Caco-2 (cell line): ENCODE measurements at regions of chr17 and their contacts with region 1.

Region 1: DNA sequence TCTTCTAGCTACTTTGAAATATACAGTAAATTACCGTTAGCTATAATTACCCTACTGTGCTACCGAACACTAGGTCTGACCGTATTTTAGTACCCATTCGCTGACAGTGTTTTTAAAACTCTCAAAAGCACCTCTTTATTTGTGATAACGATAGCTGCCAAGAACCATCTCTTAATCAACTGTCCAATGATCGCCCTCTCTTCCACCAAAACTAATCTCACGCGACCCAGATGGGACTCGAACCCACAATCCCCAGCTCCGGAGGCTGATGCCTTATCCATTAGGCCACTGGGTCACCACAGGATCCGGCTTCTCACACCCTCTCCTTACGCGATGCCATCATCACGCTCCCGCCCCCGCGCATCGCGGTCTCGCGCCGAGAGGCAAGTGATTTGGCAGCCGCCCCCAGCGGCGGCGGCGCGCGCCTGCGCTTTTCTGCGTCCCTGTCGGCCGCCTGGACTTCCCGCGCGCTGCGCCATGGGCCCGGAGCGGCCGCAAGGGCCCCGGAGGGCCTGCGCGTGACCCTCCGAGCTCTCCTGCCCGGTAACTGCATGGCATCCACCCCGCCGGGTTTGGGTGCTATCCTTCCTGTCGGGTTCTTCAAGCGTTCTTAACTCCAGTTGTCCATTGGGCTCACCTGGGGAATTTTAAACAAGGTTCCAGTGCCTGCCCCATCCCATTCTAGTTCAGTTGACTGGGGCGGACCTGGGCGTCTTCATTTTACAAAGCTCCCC is 15.7 kb upstream of the KPNA2 start:
- DNase-seq: peak; percentile 96 to 99
- H3K4me3 ChIP-seq: peak overlapping the region; percentile 63
- H3K4me3 Mint-ChIP-seq: peak overlapping the region; percentile 92
- H3K27ac Mint-ChIP-seq: peak overlapping the region; percentile 96
- H3K4me1 ChIP-seq: 0 out of 2 replicates have a peak, but pooled peaks cover 4% of the 10 kb centered on the region
- H3K4me1 Mint-ChIP-seq: peaks cover 9% of the 10 kb centered on the region
- H3K27me3 ChIP-seq: no peaks in the 10 kb centered on the region
- H3K27me3 Mint-ChIP-seq: peaks cover 3% of the 10 kb centered on the region
- CTCF ChIP-seq: peak; percentile 43 to 70

Region 2: GRCh38 chr17:67993596-67994361 is 26.1 kb before region 1 on chr17:
- CTCF ChIA-PET with region 1: interaction called, 7 read pairs
- POLR2A ChIA-PET with region 1: interaction called, 5 read pairs
- intact Hi-C with region 1: loop called (anchors 1 kb)
- DNase-seq: peak; percentile 84 to 93
- H3K4me3 ChIP-seq: peak overlapping the region; percentile 68
- H3K4me3 Mint-ChIP-seq: peak overlapping the region; percentile 96
- H3K27ac Mint-ChIP-seq: peak overlapping the region; percentile 76
- H3K4me1 ChIP-seq: peaks cover 6% of the 10 kb centered on the region; the same call in 1 of the 2 replicates
- H3K4me1 Mint-ChIP-seq: peaks cover 15% of the 10 kb centered on the region
- H3K27me3 ChIP-seq: no peaks in the 10 kb centered on the region
- H3K27me3 Mint-ChIP-seq: no peaks in the 10 kb centered on the region
- CTCF ChIP-seq: no peak

Region 3: DNA sequence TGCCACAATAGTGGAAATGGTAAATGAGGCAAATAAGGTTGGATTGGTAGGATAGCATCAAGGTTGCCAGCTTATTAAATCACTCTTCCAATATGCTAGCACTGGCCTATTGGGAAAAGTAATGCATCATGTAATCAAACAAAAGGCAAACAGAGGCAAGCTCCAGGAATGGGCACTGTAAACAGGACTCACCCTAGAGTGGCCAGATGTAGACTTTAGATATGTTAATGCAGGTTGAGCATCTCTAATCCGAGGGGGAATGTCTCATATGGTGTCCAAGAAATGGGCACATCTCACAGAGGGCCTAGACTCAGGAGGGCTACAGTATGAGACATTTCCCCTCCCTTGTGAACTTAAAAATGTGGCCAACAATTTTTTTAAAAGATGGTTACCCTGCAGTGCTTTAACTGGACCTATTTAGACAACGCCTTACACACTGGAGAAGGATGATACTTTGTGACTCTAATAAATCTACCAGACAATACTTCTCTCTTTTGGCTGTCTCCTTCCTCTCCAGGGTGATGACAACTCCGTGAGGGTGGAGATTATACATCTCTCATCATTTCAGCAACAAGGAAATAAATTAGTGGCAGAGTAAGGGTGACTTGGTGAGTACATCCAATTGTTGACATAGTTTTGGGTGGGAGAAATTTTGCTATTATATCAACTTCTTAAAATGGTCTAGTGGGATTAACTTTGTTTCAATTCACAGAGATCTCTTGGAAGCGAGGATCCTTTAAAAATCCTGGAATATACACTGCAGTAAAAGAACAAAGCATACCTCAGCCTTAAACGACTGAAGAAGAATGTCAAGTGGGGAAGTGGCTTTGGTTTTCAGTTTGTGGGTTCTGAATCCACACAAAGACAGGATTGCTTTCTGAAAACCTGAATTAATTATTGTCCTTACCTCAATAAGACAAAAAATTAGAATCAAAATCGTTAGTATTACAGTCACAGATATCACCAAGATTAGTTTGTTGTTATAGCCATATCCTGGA is 105.3 kb after region 1 on chr17:
- CTCF ChIA-PET with region 1: no interaction called
- POLR2A ChIA-PET with region 1: no interaction called
- intact Hi-C with region 1: no loop called
- DNase-seq: no peak
- H3K4me3 ChIP-seq: no peak overlapping the region
- H3K4me3 Mint-ChIP-seq: no peak overlapping the region
- H3K27ac Mint-ChIP-seq: no peak overlapping the region
- H3K4me1 ChIP-seq: no peaks in the 10 kb centered on the region
- H3K4me1 Mint-ChIP-seq: no peaks in the 10 kb centered on the region
- H3K27me3 ChIP-seq: no peaks in the 10 kb centered on the region
- H3K27me3 Mint-ChIP-seq: no peaks in the 10 kb centered on the region
- CTCF ChIP-seq: no peak

Region 4: DNA sequence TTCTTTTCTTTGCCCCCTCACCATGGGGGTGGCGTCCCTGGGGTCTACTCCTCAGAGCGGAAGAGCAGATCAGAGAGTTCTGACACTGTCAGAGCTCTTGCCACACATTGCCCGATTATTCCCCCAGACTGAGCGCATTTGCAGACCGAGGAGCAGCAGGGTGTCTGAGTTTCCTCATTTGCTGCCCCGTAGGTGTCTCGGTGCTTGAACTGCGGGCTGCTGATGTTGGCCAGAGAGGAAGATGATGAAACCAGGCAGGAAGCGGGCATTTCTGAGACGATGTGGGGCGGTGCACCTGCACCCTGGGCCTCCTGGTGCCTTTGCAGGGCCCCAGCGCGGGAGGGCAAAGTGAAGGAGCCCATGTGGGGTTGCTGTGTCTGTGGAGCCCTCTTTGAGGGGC is 326.6 kb after region 1 on chr17:
- CTCF ChIA-PET with region 1: no interaction called
- POLR2A ChIA-PET with region 1: no interaction called
- intact Hi-C with region 1: no loop called
- DNase-seq: no peak
- H3K4me3 ChIP-seq: no peak overlapping the region
- H3K4me3 Mint-ChIP-seq: no peak overlapping the region
- H3K27ac Mint-ChIP-seq: no peak overlapping the region
- H3K4me1 ChIP-seq: no peaks in the 10 kb centered on the region
- H3K4me1 Mint-ChIP-seq: no peaks in the 10 kb centered on the region
- H3K27me3 ChIP-seq: no peaks in the 10 kb centered on the region
- H3K27me3 Mint-ChIP-seq: no peaks in the 10 kb centered on the region
- CTCF ChIP-seq: no peak